CD8-positive, alpha-beta T cell (primary cell): ENCODE measurements at regions of chr5 and their contacts with region 1.

Region 1: GRCh38 chr5:90783460-90784333 is 225.1 kb downstream of the ADGRV1 start:
- DNase-seq: peak; percentile 36 to 74 (median 65)
- ATAC-seq: peak; percentile 69
- H3K4me3 ChIP-seq: no peak overlapping the region
- H3K4me3 Mint-ChIP-seq: no peak overlapping the region
- H3K27ac ChIP-seq: no peak overlapping the region
- H3K27ac Mint-ChIP-seq: no peak overlapping the region
- H3K4me1 ChIP-seq: no peaks in the 10 kb centered on the region
- H3K4me1 Mint-ChIP-seq: no peaks in the 10 kb centered on the region
- H3K27me3 ChIP-seq: no peaks in the 10 kb centered on the region
- H3K27me3 Mint-ChIP-seq: no peaks in the 10 kb centered on the region
- CTCF ChIP-seq: peak; percentile 96

Region 2: GRCh38 chr5:90264689-90265544 is 518.8 kb before region 1 on chr5:
- CTCF ChIA-PET with region 1: no interaction called
- POLR2A ChIA-PET with region 1: no interaction called
- intact Hi-C with region 1: loop called in 1 of 2 experiments (anchors 5 kb)
- DNase-seq: peak; percentile 2 to 59 (median 41)
- ATAC-seq: no peak
- H3K4me3 ChIP-seq: no peak overlapping the region
- H3K4me3 Mint-ChIP-seq: no peak overlapping the region
- H3K27ac ChIP-seq: no peak overlapping the region
- H3K27ac Mint-ChIP-seq: no peak overlapping the region
- H3K4me1 ChIP-seq: no peaks in the 10 kb centered on the region
- H3K4me1 Mint-ChIP-seq: peaks cover 2% of the 10 kb centered on the region
- H3K27me3 ChIP-seq: no peaks in the 10 kb centered on the region
- H3K27me3 Mint-ChIP-seq: peaks cover 11% of the 10 kb centered on the region
- CTCF ChIP-seq: peak; percentile 74

Region 3: GRCh38 chr5:90440644-90441043 is 343.1 kb before region 1 on chr5:
- CTCF ChIA-PET with region 1: interaction called, 19 read pairs
- POLR2A ChIA-PET with region 1: interaction called, 3 read pairs
- intact Hi-C with region 1: loop called (anchors 1 kb)
- DNase-seq: no peak
- ATAC-seq: no peak
- H3K4me3 ChIP-seq: no peak overlapping the region
- H3K4me3 Mint-ChIP-seq: peak overlapping the region; percentile 82
- H3K27ac ChIP-seq: no peak overlapping the region
- H3K27ac Mint-ChIP-seq: no peak overlapping the region
- H3K4me1 ChIP-seq: no peaks in the 10 kb centered on the region
- H3K4me1 Mint-ChIP-seq: peaks cover 8% of the 10 kb centered on the region
- H3K27me3 ChIP-seq: no peaks in the 10 kb centered on the region
- H3K27me3 Mint-ChIP-seq: peaks cover 5% of the 10 kb centered on the region
- CTCF ChIP-seq: no peak

Region 4: DNA sequence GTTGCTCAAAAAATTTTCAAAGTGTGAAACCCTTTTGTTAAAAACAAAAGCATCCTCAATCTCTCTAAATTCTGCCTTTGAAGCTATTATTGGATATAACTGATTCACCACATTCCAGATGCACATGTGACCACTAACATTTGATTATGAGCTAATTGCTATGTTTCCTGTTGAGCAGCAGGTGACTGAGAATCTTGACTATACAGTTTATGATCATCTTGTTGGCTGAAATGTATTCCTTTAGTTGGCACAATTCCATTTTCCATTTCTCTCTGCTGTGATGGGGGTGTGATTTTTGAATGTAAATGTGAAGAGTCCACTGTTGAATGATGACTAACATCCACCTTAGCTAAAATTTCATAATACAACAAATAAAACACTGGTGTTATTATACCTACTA is 265.0 kb before region 1 on chr5:
- CTCF ChIA-PET with region 1: no interaction called
- POLR2A ChIA-PET with region 1: no interaction called
- intact Hi-C with region 1: no loop called
- DNase-seq: no peak
- ATAC-seq: no peak
- H3K4me3 ChIP-seq: no peak overlapping the region
- H3K4me3 Mint-ChIP-seq: no peak overlapping the region
- H3K27ac ChIP-seq: no peak overlapping the region
- H3K27ac Mint-ChIP-seq: no peak overlapping the region
- H3K4me1 ChIP-seq: no peaks in the 10 kb centered on the region
- H3K4me1 Mint-ChIP-seq: peaks cover 19% of the 10 kb centered on the region
- H3K27me3 ChIP-seq: no peaks in the 10 kb centered on the region
- H3K27me3 Mint-ChIP-seq: no peaks in the 10 kb centered on the region
- CTCF ChIP-seq: no peak